ENCODE measurements at regions of chr12 and their contacts with region 1.

Region 1: DNA sequence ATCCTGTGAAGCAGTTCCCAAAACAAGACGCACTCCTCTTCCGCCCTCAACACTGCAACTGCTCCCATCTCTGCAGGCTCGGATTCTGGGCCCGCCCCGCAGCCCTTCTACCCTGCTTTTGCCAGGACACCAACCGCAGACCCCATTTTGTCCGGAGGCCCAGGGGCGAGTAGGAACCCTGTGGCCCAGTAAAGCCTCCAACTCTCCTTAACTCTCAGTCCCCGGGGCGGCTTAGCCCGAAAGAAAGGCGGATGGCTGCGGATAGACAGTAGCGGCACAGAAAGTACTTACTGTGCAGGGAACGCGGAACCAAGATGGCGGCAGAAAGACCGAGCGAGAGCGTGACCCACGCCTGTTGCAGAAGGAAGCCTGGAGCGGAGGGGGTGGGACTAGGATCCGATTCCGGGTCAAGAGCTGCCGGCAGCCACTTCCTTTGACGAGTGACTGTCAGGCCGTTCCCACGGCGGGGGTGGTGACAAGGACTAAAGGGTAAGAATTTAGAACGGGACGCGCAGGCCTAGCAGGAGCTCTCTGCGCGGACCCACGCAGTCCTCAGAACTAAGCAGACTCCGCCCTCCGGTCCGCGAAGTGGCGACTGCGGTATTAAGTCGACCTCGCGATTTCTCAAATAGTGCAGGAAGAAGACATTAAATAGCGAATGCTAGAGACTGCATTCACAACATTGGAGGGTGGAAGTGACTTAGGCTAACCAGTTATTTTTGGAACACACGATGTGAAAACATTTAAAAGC is at the start of gene NACA:
- DNase-seq: peak; percentile 100
- ATAC-seq: peak; percentile 96
- total RNA-seq, gene NACA: 432 TPM

Region 2: DNA sequence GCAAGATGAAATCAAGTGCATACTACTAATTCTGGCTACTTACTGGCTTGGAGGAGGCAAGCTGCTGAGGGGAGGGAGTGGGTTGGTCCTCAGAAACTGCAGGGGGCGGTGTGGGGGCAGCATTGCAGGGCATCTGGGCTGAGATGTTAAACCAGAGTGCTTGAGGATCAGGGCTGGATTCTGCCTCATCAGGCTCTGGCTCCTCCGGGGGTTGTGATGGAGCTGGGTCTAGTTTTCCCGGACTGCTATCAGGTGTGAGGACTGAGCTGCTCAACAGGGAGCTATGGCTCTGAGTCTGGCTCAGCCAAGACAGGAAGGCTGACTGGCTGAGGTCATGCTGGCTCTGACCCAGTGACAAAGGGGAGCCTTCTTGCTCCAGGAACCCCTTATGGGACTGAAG is 123.6 kb before region 1 on chr12:
- intact Hi-C with region 1: no loop called
- DNase-seq: no peak
- ATAC-seq: peak; percentile 32

Region 3: DNA sequence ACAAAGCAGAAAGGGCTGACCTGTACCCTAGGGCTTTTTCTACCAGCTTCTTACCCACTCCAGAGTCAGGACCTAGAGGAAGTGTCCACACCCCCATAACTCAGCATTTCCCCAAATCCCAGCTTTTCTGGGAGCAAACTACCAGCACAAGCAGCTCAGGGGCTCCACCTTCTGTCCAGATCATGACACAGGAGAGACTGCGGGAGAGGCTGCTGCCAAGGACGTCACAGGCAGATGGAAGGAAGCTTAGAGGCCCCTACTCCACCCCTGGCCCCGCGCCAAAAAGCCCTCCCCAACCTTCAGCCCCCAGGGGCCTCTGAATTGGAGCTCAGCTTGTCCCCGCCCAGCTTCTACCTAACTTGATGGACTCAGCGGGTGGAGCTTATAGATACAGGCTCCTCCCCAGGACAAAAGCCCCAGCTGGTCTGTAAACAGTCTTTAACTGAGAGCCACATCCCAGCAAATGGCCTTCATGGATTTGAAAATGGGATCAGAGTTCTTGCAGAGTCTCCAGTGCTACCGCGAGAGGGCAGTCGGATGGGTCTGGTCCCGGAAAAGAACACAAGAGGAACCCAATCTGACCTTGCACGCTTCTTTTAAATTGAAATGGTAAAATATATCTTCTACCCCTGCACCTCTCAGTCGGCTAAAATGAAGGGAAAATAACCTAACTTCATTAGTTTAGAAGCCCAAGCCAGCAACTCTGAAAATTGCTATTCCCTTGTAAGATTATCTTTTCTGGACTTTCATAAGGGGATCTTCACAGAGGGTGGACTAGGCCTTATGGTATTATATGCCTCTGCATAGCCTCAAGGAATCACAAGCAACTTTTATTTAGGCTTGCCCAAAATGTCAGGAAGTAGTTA is 88.2 kb before region 1 on chr12:
- intact Hi-C with region 1: loop called (anchors 2 kb)
- DNase-seq: peak; percentile 98
- ATAC-seq: peak; percentile 84

Region 4: DNA sequence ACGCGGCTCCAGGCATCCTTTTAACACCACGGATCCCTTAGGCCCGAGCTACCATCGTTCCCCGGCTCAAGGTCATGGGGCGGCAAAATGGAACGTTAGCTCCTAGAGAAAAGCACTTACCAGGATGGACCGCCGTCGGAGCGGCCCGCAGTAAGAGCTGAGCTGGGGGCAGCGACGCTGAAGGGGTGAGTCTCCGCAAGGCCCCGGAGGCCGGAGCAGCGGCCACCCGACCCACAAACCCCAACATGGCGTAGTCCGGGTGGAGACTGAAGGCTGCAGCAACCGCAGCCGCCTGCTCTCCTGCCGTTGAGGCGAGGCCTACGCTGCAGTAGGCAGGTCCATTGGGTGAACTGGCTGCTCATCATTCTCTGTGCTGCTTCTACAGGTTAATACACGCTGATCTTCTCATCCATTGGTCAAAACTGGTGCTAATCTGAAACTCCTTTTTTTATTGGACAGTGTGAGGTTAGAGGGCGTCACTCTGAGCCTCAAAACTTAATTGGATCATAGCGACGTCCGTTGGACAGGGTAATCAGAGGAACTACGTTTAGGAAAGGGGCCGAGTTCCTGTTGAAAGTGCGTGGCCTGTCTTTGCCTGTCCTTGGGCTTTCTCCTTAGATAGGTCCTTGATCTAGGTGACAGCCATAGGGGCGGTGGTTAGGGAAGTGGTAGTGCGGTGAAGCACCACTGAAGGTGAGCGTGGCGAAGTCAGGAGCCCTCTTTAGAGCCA is 79.3 kb before region 1 on chr12 and contains the start of gene ATP5F1B:
- intact Hi-C with region 1: loop called (anchors 1 kb)
- DNase-seq: peak; percentile 97
- ATAC-seq: peak; percentile 98
- total RNA-seq, gene ATP5F1B: 3,152 TPM

Region 5: GRCh38 chr12:56688129-56688845 is 36.9 kb before region 1 on chr12 and contains the start of gene PTGES3:
- intact Hi-C with region 1: loop called (anchors 2 kb)
- DNase-seq: peak; percentile 99
- ATAC-seq: peak; percentile 96
- total RNA-seq, gene PTGES3: 132 TPM

Measured in Right ventricle myocardium inferior (tissue), 1 donor.